ENCODE measurements at regions of chr7 and their contacts with region 1.

Region 1: DNA sequence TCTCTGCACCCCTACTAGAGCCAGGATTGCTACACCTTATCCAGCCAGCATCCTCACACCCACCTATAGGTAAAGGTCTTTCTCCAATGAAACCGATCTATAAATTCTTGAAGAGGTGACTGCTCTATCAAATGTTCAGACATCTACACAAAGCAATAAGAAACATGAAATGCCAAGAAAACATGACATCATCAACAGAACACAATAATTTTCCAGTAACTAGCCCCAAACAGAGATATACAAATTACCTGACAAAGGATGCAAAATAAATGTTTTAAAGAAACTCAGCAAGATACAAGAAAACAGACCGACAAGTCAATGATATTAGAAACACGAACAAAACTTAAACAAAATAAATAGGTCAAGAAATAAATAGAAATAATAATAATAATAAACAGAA is 531.0 kb upstream of the PHF14 start:
- DNase-seq: no peak
- ATAC-seq: no peak
- H3K4me3 ChIP-seq: no peak overlapping the region
- H3K27ac ChIP-seq: no peak overlapping the region
- H3K4me1 ChIP-seq: no peaks in the 10 kb centered on the region
- H3K27me3 ChIP-seq: no peaks in the 10 kb centered on the region
- CTCF ChIP-seq: no peak
- EP300 ChIP-seq: no peak
- POLR2A ChIP-seq: no peak
- RAD21 ChIP-seq: no peak

Region 2: DNA sequence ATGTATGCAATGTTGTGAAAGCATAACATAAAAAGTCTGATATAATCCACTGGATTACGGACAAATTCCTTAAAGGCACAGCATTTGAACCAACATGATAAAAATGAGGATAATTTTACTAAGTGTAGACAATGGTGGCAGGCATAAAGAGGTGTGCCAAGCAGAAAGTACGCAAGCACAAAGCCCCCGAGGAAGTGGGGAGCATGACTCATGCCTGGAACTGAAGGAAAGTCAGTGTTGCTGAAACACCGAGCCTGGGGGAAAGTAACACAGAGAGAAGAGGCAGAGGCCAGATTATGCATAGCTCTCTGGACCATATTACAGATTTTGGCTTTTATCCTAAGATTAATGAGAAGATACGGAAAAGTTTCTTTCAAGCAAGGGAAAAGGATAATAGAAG is 41.0 kb after region 1 on chr7:
- CTCF ChIA-PET with region 1: no interaction called
- POLR2A ChIA-PET with region 1: no interaction called
- in situ Hi-C with region 1: no loop called
- intact Hi-C with region 1: loop called (anchors 1 kb)
- DNase-seq: no peak
- ATAC-seq: no peak
- H3K4me3 ChIP-seq: no peak overlapping the region
- H3K27ac ChIP-seq: no peak overlapping the region
- H3K4me1 ChIP-seq: no peaks in the 10 kb centered on the region
- H3K27me3 ChIP-seq: no peaks in the 10 kb centered on the region
- CTCF ChIP-seq: no peak
- EP300 ChIP-seq: no peak
- POLR2A ChIP-seq: no peak
- RAD21 ChIP-seq: no peak